Activated CD4-positive, alpha-beta T cell treated with anti-CD3 and anti-CD28 coated beads, Interleukin-2, amount 10 ng/mL, durations not matched to agents 24 days and 14 days (primary cell): ENCODE measurements at regions of chrX and their contacts with region 1.

Region 1: DNA sequence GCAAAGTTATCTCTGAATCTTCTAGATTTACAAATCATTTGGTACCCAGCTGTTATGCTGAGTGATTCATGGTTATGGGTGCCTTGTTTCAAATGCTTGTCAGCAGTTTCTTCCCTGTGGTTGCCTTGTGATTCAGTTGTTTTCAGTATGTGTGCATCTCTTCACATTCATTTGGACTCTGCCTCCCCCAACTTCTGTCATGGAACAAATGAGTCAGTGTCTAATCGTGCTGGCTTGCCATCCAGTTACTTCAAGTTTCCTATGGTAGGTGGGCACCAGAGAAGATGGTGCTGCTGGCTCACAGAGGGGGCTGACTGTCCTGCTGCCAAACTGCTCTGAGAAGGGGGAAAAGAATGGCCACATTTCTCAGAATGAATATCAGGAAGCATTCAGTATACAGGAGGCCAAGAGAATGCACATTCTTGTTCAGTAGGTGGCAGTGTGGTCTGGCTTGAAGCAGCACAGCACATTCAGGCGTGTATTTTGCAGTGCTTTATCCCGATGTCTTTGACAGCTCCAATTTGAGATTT is 260.9 kb downstream of the GLUD2 start:
- DNase-seq: peak; percentile 82
- H3K4me3 Mint-ChIP-seq: peak overlapping the region; percentile 64
- H3K27ac Mint-ChIP-seq: peak overlapping the region; percentile 96
- H3K4me1 Mint-ChIP-seq: peaks cover 20% of the 10 kb centered on the region
- H3K27me3 Mint-ChIP-seq: peaks cover 2% of the 10 kb centered on the region

Region 2: GRCh38 chrX:120485638-120486520 is 822.5 kb before region 1 on chrX:
- intact Hi-C with region 1: loop called (anchors 10 kb)
- DNase-seq: peak; percentile 86
- H3K4me3 Mint-ChIP-seq: peak overlapping the region; percentile 79
- H3K27ac Mint-ChIP-seq: peak overlapping the region; percentile 91
- H3K4me1 Mint-ChIP-seq: peaks cover 18% of the 10 kb centered on the region
- H3K27me3 Mint-ChIP-seq: no peaks in the 10 kb centered on the region

Region 3: GRCh38 chrX:120697053-120697452 is 611.3 kb before region 1 on chrX:
- intact Hi-C with region 1: loop called (anchors 5 kb)
- DNase-seq: peak; percentile 88
- H3K4me3 Mint-ChIP-seq: peak overlapping the region; percentile 70
- H3K27ac Mint-ChIP-seq: peak overlapping the region; percentile 96
- H3K4me1 Mint-ChIP-seq: peaks cover 17% of the 10 kb centered on the region
- H3K27me3 Mint-ChIP-seq: no peaks in the 10 kb centered on the region

Region 4: GRCh38 chrX:121000587-121000986 is 307.8 kb before region 1 on chrX:
- intact Hi-C with region 1: loop called (anchors 1 kb)
- DNase-seq: no peak
- H3K4me3 Mint-ChIP-seq: no peak overlapping the region
- H3K27ac Mint-ChIP-seq: no peak overlapping the region
- H3K4me1 Mint-ChIP-seq: no peaks in the 10 kb centered on the region
- H3K27me3 Mint-ChIP-seq: no peaks in the 10 kb centered on the region

Region 5: DNA sequence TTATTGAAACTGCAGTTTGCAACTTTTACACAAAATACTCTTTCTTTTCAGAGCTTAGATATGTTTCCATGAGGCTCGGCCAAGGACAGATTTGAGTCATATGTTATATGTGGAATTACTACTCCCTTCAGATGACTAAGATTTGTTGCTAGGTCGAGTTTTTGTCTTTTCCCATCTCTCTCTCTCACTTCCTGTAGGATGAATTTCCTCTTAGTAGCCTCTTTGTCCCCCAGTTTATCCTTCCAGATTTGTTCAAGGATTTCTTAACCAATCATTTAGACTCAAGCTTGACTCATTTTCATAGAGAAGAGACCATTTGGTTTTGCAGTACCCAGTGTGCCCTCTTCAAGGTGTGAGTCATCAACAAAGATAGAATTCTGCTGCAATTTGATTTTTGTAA is 51.7 kb before region 1 on chrX:
- intact Hi-C with region 1: loop called (anchors 1 kb)
- DNase-seq: no peak
- H3K4me3 Mint-ChIP-seq: no peak overlapping the region
- H3K27ac Mint-ChIP-seq: peak overlapping the region; percentile 75
- H3K4me1 Mint-ChIP-seq: peaks cover 5% of the 10 kb centered on the region
- H3K27me3 Mint-ChIP-seq: no peaks in the 10 kb centered on the region

Region 6: GRCh38 chrX:121356139-121356849 is 48.0 kb after region 1 on chrX:
- intact Hi-C with region 1: no loop called
- DNase-seq: no peak
- H3K4me3 Mint-ChIP-seq: no peak overlapping the region
- H3K27ac Mint-ChIP-seq: no peak overlapping the region
- H3K4me1 Mint-ChIP-seq: no peaks in the 10 kb centered on the region
- H3K27me3 Mint-ChIP-seq: no peaks in the 10 kb centered on the region

Region 7: GRCh38 chrX:121579016-121579760 is 270.8 kb after region 1 on chrX:
- intact Hi-C with region 1: loop called (anchors 1 kb)
- DNase-seq: peak; percentile 54
- H3K4me3 Mint-ChIP-seq: no peak overlapping the region
- H3K27ac Mint-ChIP-seq: no peak overlapping the region
- H3K4me1 Mint-ChIP-seq: no peaks in the 10 kb centered on the region
- H3K27me3 Mint-ChIP-seq: no peaks in the 10 kb centered on the region